Activated CD4-positive, alpha-beta T cell treated with anti-CD3 and anti-CD28 coated beads for 36 hours (primary cell): ENCODE measurements at regions of chr12 and their contacts with region 1.

Region 1: DNA sequence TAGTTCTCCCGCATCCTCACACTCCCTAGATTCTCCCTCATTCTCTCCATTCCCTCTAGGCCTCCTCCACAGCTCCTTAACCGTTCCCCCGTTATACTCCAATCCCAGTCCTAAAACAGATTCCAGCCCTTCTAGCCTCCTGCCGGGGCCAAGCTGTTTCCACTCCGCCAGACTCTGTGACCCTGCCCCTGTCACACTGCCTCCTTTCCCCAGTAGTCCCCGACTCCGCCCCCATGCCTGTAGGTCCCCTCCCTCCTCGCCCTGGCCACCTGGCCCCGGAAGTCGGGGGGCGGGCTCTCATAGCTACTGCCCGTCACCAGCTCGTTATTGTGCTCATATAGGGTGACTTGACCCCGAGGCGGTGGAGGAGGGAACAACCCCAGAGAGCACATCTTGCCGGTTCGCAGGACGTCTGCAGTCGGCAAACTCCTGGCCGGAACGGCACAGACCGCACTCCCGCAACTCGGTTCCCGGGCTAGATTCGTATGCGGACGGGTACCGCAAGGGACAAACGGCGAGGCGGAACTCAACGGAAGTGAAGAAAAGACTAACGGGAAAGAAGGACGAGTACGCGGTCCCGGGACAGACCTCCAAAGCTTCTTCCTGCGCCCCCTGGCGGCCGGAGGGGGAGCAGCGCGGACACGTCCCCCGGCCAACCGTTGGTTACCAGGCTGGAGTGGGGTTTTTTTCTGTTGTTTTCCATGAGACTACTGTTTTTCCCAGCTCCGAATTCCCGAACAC is at the start of gene AAAS:
- DNase-seq: peak; percentile 98
- ATAC-seq: peak; percentile 86
- H3K4me3 Mint-ChIP-seq: peak within 1 kb of the TSS; percentile 87
- H3K27ac Mint-ChIP-seq: peak within 1 kb of the TSS; percentile 95
- H3K4me1 Mint-ChIP-seq: peaks cover 39% of the 10 kb centered on the region
- H3K27me3 Mint-ChIP-seq: no peaks in the 10 kb centered on the region
- total RNA-seq, gene AAAS: 65.5 to 72.5 TPM

Region 2: DNA sequence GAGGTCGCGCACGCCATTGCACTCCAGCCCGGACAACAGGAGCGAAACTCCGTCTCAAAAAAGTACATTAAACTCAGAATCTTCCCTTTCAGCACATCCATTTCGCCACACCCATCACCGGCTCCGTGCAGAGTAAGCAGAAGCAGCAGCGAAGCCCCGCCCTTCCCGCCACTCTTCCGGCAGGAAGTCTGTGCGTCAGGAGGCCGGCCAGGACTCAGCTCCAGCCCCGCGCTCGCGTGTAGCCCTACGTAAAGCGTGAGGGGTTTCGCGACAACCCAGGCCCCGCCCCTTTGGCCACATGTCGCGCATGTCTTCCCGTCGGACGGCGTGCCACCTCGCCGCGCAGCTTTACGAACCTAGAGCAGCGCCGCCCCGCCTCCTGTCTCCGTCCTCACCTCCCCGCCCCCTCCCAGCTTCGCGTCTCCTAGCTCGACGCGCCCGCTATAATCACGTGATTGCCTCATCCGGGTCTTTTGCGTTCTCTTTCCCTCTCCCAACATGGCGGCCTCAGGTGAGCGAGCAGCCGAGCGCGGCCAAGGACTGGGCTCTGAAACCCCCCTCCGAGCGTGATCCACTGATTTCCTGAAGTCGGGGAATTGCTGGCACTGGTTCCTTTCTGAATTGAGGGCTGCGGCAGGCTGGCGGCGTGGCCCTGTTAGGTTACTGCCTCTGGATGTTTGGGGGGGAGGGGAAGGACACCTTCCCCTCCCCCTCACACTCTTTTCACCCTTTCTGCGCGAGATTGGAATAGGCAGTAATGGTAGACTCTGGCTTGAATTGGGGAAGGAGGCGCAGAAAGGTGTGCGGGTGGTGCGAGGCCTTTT is 315.0 kb before region 1 on chr12 and contains the start of gene EIF4B:
- CTCF ChIA-PET with region 1: interaction called, 9 read pairs
- POLR2A ChIA-PET with region 1: no interaction called
- intact Hi-C with region 1: loop called in 1 of 2 experiments (anchors 1 kb)
- DNase-seq: peak; percentile 100
- ATAC-seq: peak; percentile 93
- H3K4me3 Mint-ChIP-seq: peak within 1 kb of the TSS; percentile 96
- H3K27ac Mint-ChIP-seq: peak within 1 kb of the TSS; percentile 99
- H3K4me1 Mint-ChIP-seq: peaks cover 40% of the 10 kb centered on the region
- H3K27me3 Mint-ChIP-seq: no peaks in the 10 kb centered on the region
- total RNA-seq, gene EIF4B: 698 to 781 TPM

Region 3: GRCh38 chr12:53200458-53201176 is 120.6 kb before region 1 on chr12:
- CTCF ChIA-PET with region 1: interaction called, 11 read pairs
- POLR2A ChIA-PET with region 1: no interaction called
- intact Hi-C with region 1: no loop called
- DNase-seq: peak; percentile 68
- ATAC-seq: peak; percentile 52
- H3K4me3 Mint-ChIP-seq: peak overlapping the region; percentile 44
- H3K27ac Mint-ChIP-seq: peak overlapping the region; percentile 90
- H3K4me1 Mint-ChIP-seq: peaks cover 74% of the 10 kb centered on the region
- H3K27me3 Mint-ChIP-seq: no peaks in the 10 kb centered on the region

Region 4: GRCh38 chr12:53251477-53252348 is 69.5 kb before region 1 on chr12:
- CTCF ChIA-PET with region 1: interaction called, 7 read pairs
- POLR2A ChIA-PET with region 1: no interaction called
- intact Hi-C with region 1: loop called in 1 of 2 experiments (anchors 1 kb)
- DNase-seq: peak; percentile 83
- ATAC-seq: peak; percentile 91
- H3K4me3 Mint-ChIP-seq: peak overlapping the region; percentile 97
- H3K27ac Mint-ChIP-seq: peak overlapping the region; percentile 95
- H3K4me1 Mint-ChIP-seq: peaks cover 36% of the 10 kb centered on the region
- H3K27me3 Mint-ChIP-seq: no peaks in the 10 kb centered on the region

Region 5: GRCh38 chr12:53352331-53353256 is 31.4 kb after region 1 on chr12:
- CTCF ChIA-PET with region 1: interaction called, 77 read pairs
- POLR2A ChIA-PET with region 1: no interaction called
- intact Hi-C with region 1: no loop called
- DNase-seq: peak; percentile 91
- ATAC-seq: peak; percentile 100
- H3K4me3 Mint-ChIP-seq: no peak overlapping the region
- H3K27ac Mint-ChIP-seq: peak overlapping the region; percentile 56
- H3K4me1 Mint-ChIP-seq: peaks cover 8% of the 10 kb centered on the region
- H3K27me3 Mint-ChIP-seq: no peaks in the 10 kb centered on the region

Region 6: GRCh38 chr12:53476769-53477209 is 155.5 kb after region 1 on chr12:
- CTCF ChIA-PET with region 1: interaction called, 7 read pairs
- POLR2A ChIA-PET with region 1: interaction called, 13 read pairs
- intact Hi-C with region 1: no loop called
- DNase-seq: no peak
- ATAC-seq: peak; percentile 43
- H3K4me3 Mint-ChIP-seq: no peak overlapping the region
- H3K27ac Mint-ChIP-seq: peak overlapping the region; percentile 55
- H3K4me1 Mint-ChIP-seq: peaks cover 45% of the 10 kb centered on the region
- H3K27me3 Mint-ChIP-seq: no peaks in the 10 kb centered on the region

Region 7: GRCh38 chr12:53675651-53676453 is 354.6 kb after region 1 on chr12 and contains the start of gene ATP5MC2:
- CTCF ChIA-PET with region 1: no interaction called
- POLR2A ChIA-PET with region 1: interaction called, 3 read pairs
- intact Hi-C with region 1: loop called in 1 of 2 experiments (anchors 1 kb)
- DNase-seq: peak; percentile 99
- ATAC-seq: peak; percentile 96
- H3K4me3 Mint-ChIP-seq: peak within 1 kb of the TSS; percentile 93
- H3K27ac Mint-ChIP-seq: peak within 1 kb of the TSS; percentile 95
- H3K4me1 Mint-ChIP-seq: peaks cover 29% of the 10 kb centered on the region
- H3K27me3 Mint-ChIP-seq: peaks cover 20% of the 10 kb centered on the region
- total RNA-seq, gene ATP5MC2: 356 to 415 TPM